Activated CD4-positive, alpha-beta T cell treated with anti-CD3 and anti-CD28 coated beads for 36 hours (primary cell): ENCODE measurements at regions of chr14 and their contacts with region 1.

Region 1: GRCh38 chr14:61525293-61526011 is 169.9 kb upstream of the HIF1A start:
- DNase-seq: peak; percentile 86
- ATAC-seq: peak; percentile 84
- H3K4me3 Mint-ChIP-seq: peak overlapping the region; percentile 6
- H3K27ac Mint-ChIP-seq: peak overlapping the region; percentile 86
- H3K4me1 Mint-ChIP-seq: peaks cover 87% of the 10 kb centered on the region
- H3K27me3 Mint-ChIP-seq: no peaks in the 10 kb centered on the region

Region 2: GRCh38 chr14:61326847-61327246 is 198.6 kb before region 1 on chr14:
- CTCF ChIA-PET with region 1: interaction called, 3 read pairs
- POLR2A ChIA-PET with region 1: no interaction called
- intact Hi-C with region 1: loop called in 1 of 2 experiments (anchors 5 kb)
- DNase-seq: no peak
- ATAC-seq: no peak
- H3K4me3 Mint-ChIP-seq: peak overlapping the region; percentile 92
- H3K27ac Mint-ChIP-seq: peak overlapping the region; percentile 94
- H3K4me1 Mint-ChIP-seq: peaks cover 71% of the 10 kb centered on the region
- H3K27me3 Mint-ChIP-seq: no peaks in the 10 kb centered on the region

Region 3: GRCh38 chr14:61503167-61503801 is 22.2 kb before region 1 on chr14:
- CTCF ChIA-PET with region 1: interaction called, 8 read pairs
- POLR2A ChIA-PET with region 1: interaction called, 5 read pairs
- intact Hi-C with region 1: loop called in 1 of 2 experiments (anchors 1 kb)
- DNase-seq: peak; percentile 90
- ATAC-seq: peak; percentile 80
- H3K4me3 Mint-ChIP-seq: peak overlapping the region; percentile 56
- H3K27ac Mint-ChIP-seq: peak overlapping the region; percentile 99
- H3K4me1 Mint-ChIP-seq: peaks cover 98% of the 10 kb centered on the region
- H3K27me3 Mint-ChIP-seq: no peaks in the 10 kb centered on the region

Region 4: GRCh38 chr14:61512026-61512834 is 13.2 kb before region 1 on chr14:
- CTCF ChIA-PET with region 1: interaction called, 24 read pairs
- POLR2A ChIA-PET with region 1: interaction called, 23 read pairs
- intact Hi-C with region 1: loop called (anchors 1 kb)
- DNase-seq: peak; percentile 44
- ATAC-seq: peak; percentile 59
- H3K4me3 Mint-ChIP-seq: peak overlapping the region; percentile 54
- H3K27ac Mint-ChIP-seq: peak overlapping the region; percentile 97
- H3K4me1 Mint-ChIP-seq: peaks cover 94% of the 10 kb centered on the region
- H3K27me3 Mint-ChIP-seq: no peaks in the 10 kb centered on the region

Region 5: DNA sequence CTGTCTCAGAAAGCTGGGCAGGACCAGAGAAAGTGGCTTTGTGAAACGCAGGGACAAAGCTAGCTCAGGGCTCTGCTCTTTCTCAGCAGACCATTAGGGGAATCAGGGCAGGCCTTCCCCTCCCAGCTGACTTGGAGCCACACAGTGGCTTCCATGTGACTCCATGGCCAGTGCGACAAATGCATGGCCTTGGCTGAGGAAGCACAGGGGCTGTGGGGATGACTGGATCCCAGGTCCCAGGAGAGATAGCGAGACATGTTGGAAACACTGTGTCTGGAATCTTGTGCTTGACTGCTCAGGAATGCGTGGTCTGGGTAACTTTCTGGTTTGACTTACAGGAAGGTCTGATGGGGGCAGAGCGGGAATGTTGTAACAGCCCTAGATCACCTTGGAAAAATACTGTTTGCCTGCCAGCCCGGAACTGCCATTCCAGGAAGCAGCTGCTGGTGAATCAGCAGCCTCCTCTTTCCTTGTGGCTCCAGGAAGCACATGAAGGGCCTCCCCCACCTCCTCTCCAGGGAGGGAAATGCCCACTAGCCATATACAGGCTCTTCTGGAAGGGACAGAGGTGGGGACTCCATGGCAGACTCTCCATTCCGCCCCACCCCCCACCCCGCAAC is 36.3 kb after region 1 on chr14:
- CTCF ChIA-PET with region 1: interaction called, 3 read pairs
- POLR2A ChIA-PET with region 1: interaction called, 4 read pairs
- intact Hi-C with region 1: loop called (anchors 2 kb)
- DNase-seq: no peak
- ATAC-seq: no peak
- H3K4me3 Mint-ChIP-seq: no peak overlapping the region
- H3K27ac Mint-ChIP-seq: peak overlapping the region; percentile 81
- H3K4me1 Mint-ChIP-seq: peaks cover 62% of the 10 kb centered on the region
- H3K27me3 Mint-ChIP-seq: no peaks in the 10 kb centered on the region

Region 6: DNA sequence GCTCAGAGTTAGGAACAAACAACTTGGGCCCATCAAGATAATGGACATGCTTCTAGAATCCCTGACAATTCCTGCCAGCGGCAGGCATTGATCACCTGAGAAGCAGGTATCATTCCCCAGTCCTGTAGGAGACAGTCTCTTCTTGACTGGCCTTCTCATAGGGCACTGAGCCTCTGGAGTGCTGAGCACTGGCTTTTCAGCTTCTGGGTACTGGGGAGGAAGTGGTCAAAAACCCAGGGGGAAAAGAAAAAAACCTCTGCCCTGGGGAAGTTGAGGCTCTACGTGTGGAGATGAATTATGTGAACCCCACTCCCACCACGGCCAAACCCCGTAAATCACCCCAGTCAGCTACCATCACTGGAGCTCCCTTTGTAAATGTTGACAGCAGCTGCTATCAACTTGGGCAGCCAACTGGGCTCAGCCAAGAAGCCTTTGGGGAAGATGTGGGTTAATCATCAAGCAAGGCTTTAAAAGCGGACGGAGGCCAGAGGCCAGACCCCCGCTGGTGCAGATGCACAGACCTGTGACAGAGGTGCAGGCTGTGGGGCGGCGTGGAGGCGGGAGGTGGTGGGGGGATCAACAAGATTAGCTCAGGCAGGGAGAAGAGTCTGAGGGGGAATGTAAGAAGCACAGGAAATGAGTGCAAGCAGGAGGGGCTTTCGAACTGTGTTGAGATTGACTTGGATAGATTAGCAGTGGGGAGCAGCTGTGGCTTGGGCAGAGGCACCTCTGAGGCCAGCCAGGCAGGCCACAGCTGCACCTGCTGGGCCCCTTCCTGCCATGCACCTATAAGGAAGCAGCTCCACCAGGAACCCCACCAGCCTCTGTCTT is 64.5 kb after region 1 on chr14:
- CTCF ChIA-PET with region 1: interaction called, 3 read pairs
- POLR2A ChIA-PET with region 1: no interaction called
- intact Hi-C with region 1: loop called (anchors 2 to 5 kb)
- DNase-seq: no peak
- ATAC-seq: no peak
- H3K4me3 Mint-ChIP-seq: no peak overlapping the region
- H3K27ac Mint-ChIP-seq: no peak overlapping the region
- H3K4me1 Mint-ChIP-seq: peaks cover 43% of the 10 kb centered on the region
- H3K27me3 Mint-ChIP-seq: no peaks in the 10 kb centered on the region

Region 7: DNA sequence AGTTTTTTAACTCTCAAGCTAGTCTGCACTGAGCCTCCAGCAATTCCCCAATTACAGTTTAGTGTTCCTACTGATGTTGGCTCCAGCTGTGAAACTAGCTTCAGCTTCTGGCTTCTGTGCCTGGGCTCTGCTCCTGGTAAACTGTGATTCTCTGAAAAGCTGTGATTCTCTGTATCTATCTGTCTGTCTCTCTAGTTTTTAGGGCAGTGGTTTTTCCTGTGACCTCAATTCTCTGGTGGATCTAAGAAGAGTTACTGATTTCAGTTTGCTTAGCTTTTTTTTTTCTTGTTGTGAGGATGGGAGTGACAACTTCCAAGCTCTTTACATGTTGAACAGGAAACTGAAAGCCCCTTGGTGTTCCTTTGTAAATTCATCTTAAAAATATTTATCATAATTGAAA is 166.0 kb after region 1 on chr14:
- CTCF ChIA-PET with region 1: no interaction called
- POLR2A ChIA-PET with region 1: no interaction called
- intact Hi-C with region 1: no loop called
- DNase-seq: no peak
- ATAC-seq: no peak
- H3K4me3 Mint-ChIP-seq: peak overlapping the region; percentile 21
- H3K27ac Mint-ChIP-seq: peak overlapping the region; percentile 72
- H3K4me1 Mint-ChIP-seq: peaks cover 38% of the 10 kb centered on the region
- H3K27me3 Mint-ChIP-seq: no peaks in the 10 kb centered on the region